Calu3 (cell line): ENCODE measurements at regions of chr1 and their contacts with region 1.

Region 1: GRCh38 chr1:61287734-61288133 is 205.4 kb downstream of the NFIA start:
- DNase-seq: peak; percentile 53
- H3K4me3 Mint-ChIP-seq: no peak overlapping the region
- H3K27ac Mint-ChIP-seq: peak overlapping the region; percentile 71
- H3K4me1 Mint-ChIP-seq: peaks cover 63% of the 10 kb centered on the region
- H3K27me3 Mint-ChIP-seq: no peaks in the 10 kb centered on the region
- CTCF ChIP-seq: no peak

Region 2: GRCh38 chr1:61084491-61085031 is 203.2 kb before region 1 on chr1:
- CTCF ChIA-PET with region 1: no interaction called
- intact Hi-C with region 1: loop called (anchors 5 kb)
- DNase-seq: no peak
- H3K4me3 Mint-ChIP-seq: peak overlapping the region; percentile 89
- H3K27ac Mint-ChIP-seq: peak overlapping the region; percentile 88
- H3K4me1 Mint-ChIP-seq: peaks cover 47% of the 10 kb centered on the region
- H3K27me3 Mint-ChIP-seq: no peaks in the 10 kb centered on the region
- CTCF ChIP-seq: no peak

Region 3: DNA sequence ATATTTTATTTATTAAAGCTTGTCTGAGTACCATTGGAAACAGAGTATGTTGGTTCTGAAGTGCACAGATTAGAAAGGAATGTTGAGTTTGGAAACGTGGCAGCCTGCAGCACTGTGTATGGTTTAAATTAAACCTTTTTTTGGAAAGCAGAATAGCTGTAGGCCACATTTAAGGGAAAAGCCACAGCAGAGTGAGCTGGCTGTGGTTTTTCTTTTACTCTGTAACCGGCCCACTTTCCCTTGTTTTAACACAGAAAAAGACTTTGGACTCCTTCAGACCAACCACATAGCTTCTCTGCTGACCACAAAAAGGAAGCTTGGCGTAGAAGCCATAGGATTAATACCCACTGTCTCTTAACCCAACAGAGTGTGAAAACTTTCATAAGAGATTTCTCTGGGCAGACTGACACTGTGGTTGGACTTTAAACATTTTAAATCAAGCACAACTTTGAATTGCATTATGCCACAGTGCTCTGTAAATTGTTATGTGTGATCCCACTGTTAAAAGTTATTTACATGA is 130.2 kb before region 1 on chr1:
- CTCF ChIA-PET with region 1: interaction called, 3 read pairs
- intact Hi-C with region 1: loop called (anchors 10 kb)
- DNase-seq: no peak
- H3K4me3 Mint-ChIP-seq: no peak overlapping the region
- H3K27ac Mint-ChIP-seq: no peak overlapping the region
- H3K4me1 Mint-ChIP-seq: peaks cover 43% of the 10 kb centered on the region
- H3K27me3 Mint-ChIP-seq: no peaks in the 10 kb centered on the region
- CTCF ChIP-seq: no peak

Region 4: GRCh38 chr1:61221642-61222041 is 66.1 kb before region 1 on chr1:
- CTCF ChIA-PET with region 1: interaction called, 4 read pairs
- intact Hi-C with region 1: loop called (anchors 5 kb)
- DNase-seq: no peak
- H3K4me3 Mint-ChIP-seq: peak overlapping the region; percentile 43
- H3K27ac Mint-ChIP-seq: peak overlapping the region; percentile 92
- H3K4me1 Mint-ChIP-seq: peaks cover 11% of the 10 kb centered on the region
- H3K27me3 Mint-ChIP-seq: no peaks in the 10 kb centered on the region
- CTCF ChIP-seq: no peak

Region 5: DNA sequence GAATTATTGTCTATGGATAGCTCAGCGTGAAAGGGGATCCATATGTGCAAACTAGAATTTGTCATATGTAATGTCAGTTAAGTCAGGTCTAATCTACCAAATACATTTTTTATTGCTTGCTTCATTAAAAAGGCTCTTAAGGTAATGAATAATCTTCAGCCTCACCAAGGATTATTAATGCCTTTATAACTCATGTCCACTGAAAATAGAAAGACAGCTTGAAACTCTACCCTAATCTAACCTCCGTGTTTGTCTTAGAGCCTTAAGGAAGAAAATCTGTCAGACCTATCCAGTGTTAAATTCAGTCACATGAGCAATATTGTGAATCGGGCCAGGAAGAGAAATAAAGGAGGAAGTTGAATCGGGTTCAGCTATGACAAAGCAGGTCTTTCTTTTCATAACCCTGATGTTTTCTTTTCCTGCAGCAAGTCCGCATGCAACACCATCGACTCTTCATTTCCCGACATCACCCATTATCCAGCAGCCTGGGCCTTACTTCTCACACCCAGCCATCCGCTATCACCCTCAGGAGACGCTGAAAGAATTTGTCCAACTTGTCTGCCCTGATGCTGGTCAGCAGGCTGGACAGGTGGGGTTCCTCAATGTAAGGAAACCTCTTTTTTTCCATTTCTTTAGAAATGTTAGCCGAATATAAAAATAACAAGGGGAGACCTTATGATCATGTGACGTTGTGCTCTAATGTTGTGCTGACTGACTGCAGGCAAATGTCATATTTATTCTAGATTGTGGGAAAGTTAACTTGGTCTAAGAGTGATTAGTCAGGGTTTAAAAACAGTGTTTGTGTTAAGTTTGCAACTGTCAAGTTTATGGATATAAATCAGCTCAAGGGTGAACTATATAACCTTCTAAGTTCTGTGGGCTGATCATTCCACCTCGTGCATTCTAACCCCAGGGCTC is 116.2 kb after region 1 on chr1:
- CTCF ChIA-PET with region 1: no interaction called
- intact Hi-C with region 1: loop called (anchors 5 kb)
- DNase-seq: peak; percentile 19
- H3K4me3 Mint-ChIP-seq: peak overlapping the region; percentile 40
- H3K27ac Mint-ChIP-seq: peak overlapping the region; percentile 82
- H3K4me1 Mint-ChIP-seq: peaks cover 48% of the 10 kb centered on the region
- H3K27me3 Mint-ChIP-seq: no peaks in the 10 kb centered on the region
- CTCF ChIP-seq: no peak

Region 6: GRCh38 chr1:61436016-61436415 is 148.3 kb after region 1 on chr1:
- CTCF ChIA-PET with region 1: no interaction called
- intact Hi-C with region 1: loop called (anchors 5 kb)
- DNase-seq: no peak
- H3K4me3 Mint-ChIP-seq: no peak overlapping the region
- H3K27ac Mint-ChIP-seq: no peak overlapping the region
- H3K4me1 Mint-ChIP-seq: peaks cover 60% of the 10 kb centered on the region
- H3K27me3 Mint-ChIP-seq: no peaks in the 10 kb centered on the region
- CTCF ChIP-seq: no peak